Activated CD4-positive, alpha-beta T cell treated with anti-CD3 and anti-CD28 coated beads for 36 hours (primary cell): ENCODE measurements at regions of chr11 and their contacts with region 1.

Region 1: GRCh38 chr11:46121724-46122477 is 647 bp upstream of the PHF21A start:
- DNase-seq: peak; percentile 83
- ATAC-seq: peak; percentile 39
- H3K4me3 Mint-ChIP-seq: peak overlapping the region; percentile 81
- H3K27ac Mint-ChIP-seq: peak overlapping the region; percentile 86
- H3K4me1 Mint-ChIP-seq: peaks cover 41% of the 10 kb centered on the region
- H3K27me3 Mint-ChIP-seq: no peaks in the 10 kb centered on the region

Region 2: GRCh38 chr11:45354976-45355705 is 766.8 kb before region 1 on chr11:
- CTCF ChIA-PET with region 1: no interaction called
- POLR2A ChIA-PET with region 1: no interaction called
- intact Hi-C with region 1: loop called in 1 of 2 experiments (anchors 5 kb)
- DNase-seq: peak; percentile 93
- ATAC-seq: peak; percentile 97
- H3K4me3 Mint-ChIP-seq: peak overlapping the region; percentile 75
- H3K27ac Mint-ChIP-seq: peak overlapping the region; percentile 72
- H3K4me1 Mint-ChIP-seq: peaks cover 21% of the 10 kb centered on the region
- H3K27me3 Mint-ChIP-seq: peaks cover 2% of the 10 kb centered on the region

Region 3: GRCh38 chr11:45804761-45805304 is 317.1 kb before region 1 on chr11 and contains the start of gene SLC35C1:
- CTCF ChIA-PET with region 1: no interaction called
- POLR2A ChIA-PET with region 1: no interaction called
- intact Hi-C with region 1: loop called in 1 of 2 experiments (anchors 2 kb)
- DNase-seq: peak; percentile 98
- ATAC-seq: peak; percentile 97
- H3K4me3 Mint-ChIP-seq: peak within 1 kb of the TSS; percentile 91
- H3K27ac Mint-ChIP-seq: peak within 1 kb of the TSS; percentile 86
- H3K4me1 Mint-ChIP-seq: peaks cover 42% of the 10 kb centered on the region
- H3K27me3 Mint-ChIP-seq: no peaks in the 10 kb centered on the region
- total RNA-seq, gene SLC35C1: 9.6 to 9.8 TPM

Region 4: DNA sequence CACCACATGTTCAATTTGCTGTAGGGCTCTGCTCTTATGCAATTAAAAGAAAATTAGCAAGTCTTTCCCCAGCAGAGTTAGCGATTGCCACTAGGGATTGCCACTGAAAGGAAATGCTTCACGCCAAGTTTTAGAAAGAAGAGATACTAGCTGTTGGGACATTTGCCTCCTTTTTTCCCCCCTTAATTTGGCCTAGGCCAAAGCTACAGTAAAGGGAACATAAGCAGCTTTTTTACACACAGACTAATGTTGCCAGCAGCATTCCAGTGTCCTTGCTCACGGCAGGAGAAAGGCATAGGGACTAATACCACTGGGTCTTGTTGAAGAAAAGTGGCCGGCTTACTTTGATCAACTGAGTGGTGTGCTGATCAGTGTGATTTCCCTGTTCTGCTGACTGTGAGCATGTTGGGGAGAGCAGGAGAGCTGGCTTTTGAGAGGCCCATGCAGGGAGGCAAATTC is 71.9 kb before region 1 on chr11:
- CTCF ChIA-PET with region 1: no interaction called
- POLR2A ChIA-PET with region 1: interaction called, 16 read pairs
- intact Hi-C with region 1: no loop called
- DNase-seq: no peak
- ATAC-seq: no peak
- H3K4me3 Mint-ChIP-seq: no peak overlapping the region
- H3K27ac Mint-ChIP-seq: no peak overlapping the region
- H3K4me1 Mint-ChIP-seq: peaks cover 7% of the 10 kb centered on the region
- H3K27me3 Mint-ChIP-seq: no peaks in the 10 kb centered on the region

Region 5: DNA sequence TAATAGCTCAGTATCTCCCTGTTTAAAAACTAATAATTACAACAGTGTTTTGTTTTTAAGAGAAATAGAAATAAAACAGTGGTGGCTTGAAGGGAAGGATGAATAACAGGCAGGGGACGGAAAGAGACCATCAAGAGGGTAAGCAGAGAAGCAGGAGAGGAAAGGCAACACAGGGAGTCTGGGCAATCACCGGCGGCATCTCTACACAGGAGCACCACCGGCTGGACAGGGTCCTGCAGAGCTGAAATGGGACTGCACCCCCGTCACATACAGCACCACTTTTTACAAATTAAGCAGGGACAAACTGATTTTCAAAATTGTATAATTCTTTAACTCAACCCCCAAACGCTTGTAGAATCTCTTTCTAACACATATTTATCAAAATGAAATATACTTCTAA is 19.1 kb before region 1 on chr11:
- CTCF ChIA-PET with region 1: no interaction called
- POLR2A ChIA-PET with region 1: no interaction called
- intact Hi-C with region 1: no loop called
- DNase-seq: no peak
- ATAC-seq: no peak
- H3K4me3 Mint-ChIP-seq: no peak overlapping the region
- H3K27ac Mint-ChIP-seq: no peak overlapping the region
- H3K4me1 Mint-ChIP-seq: peaks cover 36% of the 10 kb centered on the region
- H3K27me3 Mint-ChIP-seq: no peaks in the 10 kb centered on the region

Region 6: GRCh38 chr11:46315033-46315738 is 193.3 kb after region 1 on chr11:
- CTCF ChIA-PET with region 1: no interaction called
- POLR2A ChIA-PET with region 1: interaction called, 3 read pairs
- intact Hi-C with region 1: loop called (anchors 5 to 10 kb)
- DNase-seq: peak; percentile 86
- ATAC-seq: peak; percentile 81
- H3K4me3 Mint-ChIP-seq: no peak overlapping the region
- H3K27ac Mint-ChIP-seq: no peak overlapping the region
- H3K4me1 Mint-ChIP-seq: peaks cover 16% of the 10 kb centered on the region
- H3K27me3 Mint-ChIP-seq: no peaks in the 10 kb centered on the region

Region 7: DNA sequence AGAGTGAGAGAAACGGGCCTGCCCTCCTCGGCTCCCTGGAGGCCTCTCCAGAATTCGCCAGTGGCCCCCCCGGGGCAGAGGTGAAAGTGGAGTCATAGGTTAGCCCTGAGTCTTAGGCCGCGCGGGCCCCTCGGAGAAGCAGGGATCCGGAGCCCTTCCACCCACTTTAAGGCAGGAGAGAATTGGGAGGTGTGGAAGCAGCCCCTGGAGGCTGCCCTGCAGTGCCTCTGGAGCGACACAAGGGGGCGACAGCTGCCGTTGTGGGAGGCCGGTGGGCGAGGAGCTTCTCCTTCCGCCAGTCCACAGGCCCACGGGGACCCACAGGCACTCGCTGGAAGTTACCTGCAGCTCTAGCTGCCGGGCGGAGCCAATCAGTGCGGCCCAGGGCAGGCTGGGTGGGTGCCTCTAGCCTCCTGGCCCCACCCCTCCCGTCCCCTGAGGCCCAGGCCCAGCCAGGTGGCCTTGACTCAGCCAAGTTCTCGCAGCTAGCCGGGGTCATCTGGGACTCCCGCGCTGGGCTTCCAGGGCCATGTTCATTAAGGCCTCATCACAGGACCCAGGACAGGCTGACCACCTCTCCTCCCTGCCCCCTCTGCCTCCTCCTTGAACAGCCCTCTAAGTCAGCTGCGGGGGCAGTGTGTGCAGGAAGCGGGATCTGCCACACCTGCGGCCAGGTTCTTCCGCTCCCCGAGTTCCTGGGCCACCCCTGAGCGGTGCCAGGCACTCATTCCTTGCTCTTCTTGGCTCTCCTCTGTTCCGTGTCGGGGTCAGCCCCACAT is 230.4 kb after region 1 on chr11:
- CTCF ChIA-PET with region 1: interaction called, 3 read pairs
- POLR2A ChIA-PET with region 1: no interaction called
- intact Hi-C with region 1: loop called (anchors 1 to 5 kb)
- DNase-seq: peak; percentile 88
- ATAC-seq: peak; percentile 39
- H3K4me3 Mint-ChIP-seq: peak overlapping the region; percentile 76
- H3K27ac Mint-ChIP-seq: peak overlapping the region; percentile 94
- H3K4me1 Mint-ChIP-seq: peaks cover 82% of the 10 kb centered on the region
- H3K27me3 Mint-ChIP-seq: no peaks in the 10 kb centered on the region

Region 8: DNA sequence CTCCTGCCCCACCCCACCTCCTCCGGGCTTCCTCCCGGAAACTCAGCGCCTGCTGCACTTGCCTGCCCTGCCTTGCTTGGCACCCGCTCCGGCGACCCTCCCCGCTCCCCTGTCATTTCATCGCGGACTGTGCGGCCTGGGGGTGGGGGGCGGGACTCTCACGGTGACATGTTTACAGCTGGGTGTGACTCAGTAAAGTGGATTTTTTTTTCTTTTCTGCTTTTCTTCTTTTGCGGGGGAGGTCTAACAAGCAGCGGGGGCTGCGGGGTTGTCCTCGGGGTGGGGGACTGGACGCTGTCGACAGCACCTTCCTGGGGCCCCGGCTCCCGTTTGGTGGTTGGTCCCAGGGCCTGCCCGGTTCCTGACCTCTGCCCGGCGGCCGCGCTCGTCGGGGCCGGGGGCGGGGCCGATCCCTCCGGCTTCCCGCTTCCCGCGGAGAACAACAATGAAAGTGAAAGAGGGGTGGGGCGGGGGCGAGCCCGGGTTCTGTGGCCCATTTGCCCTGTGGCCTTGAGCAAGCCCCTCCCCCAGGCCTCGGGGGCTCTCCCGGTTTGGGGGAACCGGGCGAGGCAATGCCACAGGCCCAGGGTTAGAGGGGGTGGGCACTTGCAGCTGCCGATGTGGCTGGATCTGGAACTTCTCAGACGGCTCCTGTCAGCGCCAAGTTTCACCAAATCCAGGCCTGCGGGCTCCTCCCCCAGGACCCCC is 258.6 kb after region 1 on chr11:
- CTCF ChIA-PET with region 1: no interaction called
- POLR2A ChIA-PET with region 1: no interaction called
- intact Hi-C with region 1: loop called in 1 of 2 experiments (anchors 2 kb)
- DNase-seq: peak; percentile 90
- ATAC-seq: peak; percentile 65
- H3K4me3 Mint-ChIP-seq: peak overlapping the region; percentile 72
- H3K27ac Mint-ChIP-seq: peak overlapping the region; percentile 58
- H3K4me1 Mint-ChIP-seq: peaks cover 8% of the 10 kb centered on the region
- H3K27me3 Mint-ChIP-seq: peaks cover 8% of the 10 kb centered on the region